ENCODE measurements at regions of chr11 and their contacts with region 1.

Region 1: DNA sequence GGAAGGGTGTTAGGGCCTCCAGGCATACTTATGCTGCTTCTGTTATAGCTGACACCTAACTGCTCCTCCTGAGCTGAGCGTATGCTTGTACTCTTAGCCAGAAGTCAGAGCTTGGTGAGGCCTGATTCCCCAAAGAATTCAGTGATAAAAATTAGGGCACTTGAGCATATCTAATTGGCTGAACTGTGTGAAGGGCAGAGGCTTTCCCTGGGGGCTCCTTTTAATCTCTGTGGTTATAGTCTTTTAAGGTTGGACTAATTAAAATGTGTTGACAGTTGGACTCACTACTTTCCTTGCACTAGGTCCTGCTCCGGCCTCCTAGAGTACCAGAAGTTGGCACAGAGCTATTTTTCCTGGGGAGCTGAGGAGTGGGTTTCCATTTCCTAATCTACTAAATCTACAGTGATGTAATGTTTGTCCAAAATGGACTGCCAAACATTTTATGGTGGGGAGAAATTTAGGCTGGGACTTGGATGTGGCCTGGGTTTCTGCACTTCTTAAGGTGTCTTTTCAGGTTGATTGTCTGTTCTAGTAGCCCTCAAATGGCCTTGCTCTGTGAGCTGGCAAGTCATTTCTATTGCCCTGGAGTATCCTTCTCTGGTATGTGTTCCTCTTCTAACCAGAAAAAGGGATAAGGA is 18.4 kb downstream of the STIM1 start:
- DNase-seq: no peak
- ATAC-seq: no peak
- H3K4me3 ChIP-seq: no peak overlapping the region
- H3K4me3 Mint-ChIP-seq: no peak overlapping the region
- H3K27ac ChIP-seq: no peak overlapping the region
- H3K27ac Mint-ChIP-seq: peak overlapping the region; percentile 41
- H3K4me1 ChIP-seq: peaks cover 75% of the 10 kb centered on the region
- H3K4me1 Mint-ChIP-seq: peaks cover 85% of the 10 kb centered on the region
- H3K27me3 ChIP-seq: no peaks in the 10 kb centered on the region
- H3K27me3 Mint-ChIP-seq: no peaks in the 10 kb centered on the region
- CTCF ChIP-seq: no peak

Region 2: DNA sequence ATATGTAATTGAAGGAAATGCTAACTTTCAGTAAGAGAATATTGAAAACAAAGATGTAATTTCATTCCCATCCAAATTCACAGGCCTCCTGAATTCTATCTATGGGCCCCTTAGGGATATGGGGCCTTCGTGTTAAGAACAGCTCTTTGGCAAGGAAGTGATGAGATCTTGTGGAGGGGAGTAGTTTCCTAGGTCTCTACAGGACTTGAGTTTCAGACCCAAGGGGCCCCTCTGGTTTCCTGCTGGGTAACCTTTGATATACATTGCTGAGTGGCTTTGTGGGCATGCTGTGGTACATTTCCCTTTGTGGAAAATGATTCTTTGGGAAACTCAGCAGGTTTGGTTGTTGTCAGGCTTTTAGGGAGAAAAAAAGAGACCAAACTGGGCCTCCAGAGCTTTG is 12.1 kb before region 1 on chr11:
- CTCF ChIA-PET with region 1: interaction called, 5 read pairs
- POLR2A ChIA-PET with region 1: interaction called, 10 read pairs
- intact Hi-C with region 1: loop called in 1 of 2 experiments (anchors 2 kb)
- DNase-seq: peak in 1 of 9 experiments; percentile 42
- ATAC-seq: no peak
- H3K4me3 ChIP-seq: peak overlapping the region in 1 of 2 experiments; percentile 28
- H3K4me3 Mint-ChIP-seq: peak overlapping the region; percentile 93
- H3K27ac ChIP-seq: peak overlapping the region in 1 of 2 experiments; percentile 61
- H3K27ac Mint-ChIP-seq: peak overlapping the region; percentile 90
- H3K4me1 ChIP-seq: peaks cover 96% of the 10 kb centered on the region
- H3K4me1 Mint-ChIP-seq: peaks cover 89% of the 10 kb centered on the region
- H3K27me3 ChIP-seq: no peaks in the 10 kb centered on the region
- H3K27me3 Mint-ChIP-seq: no peaks in the 10 kb centered on the region
- CTCF ChIP-seq: no peak

Region 3: GRCh38 chr11:4146070-4146771 is 272.4 kb after region 1 on chr11:
- CTCF ChIA-PET with region 1: no interaction called
- POLR2A ChIA-PET with region 1: no interaction called
- intact Hi-C with region 1: no loop called
- DNase-seq: no peak
- ATAC-seq: no peak
- H3K4me3 ChIP-seq: no peak overlapping the region
- H3K4me3 Mint-ChIP-seq: no peak overlapping the region
- H3K27ac ChIP-seq: no peak overlapping the region
- H3K27ac Mint-ChIP-seq: no peak overlapping the region
- H3K4me1 ChIP-seq: no peaks in the 10 kb centered on the region
- H3K4me1 Mint-ChIP-seq: no peaks in the 10 kb centered on the region
- H3K27me3 ChIP-seq: no peaks in the 10 kb centered on the region
- H3K27me3 Mint-ChIP-seq: no peaks in the 10 kb centered on the region
- CTCF ChIP-seq: no peak